Activated CD8-positive, alpha-beta T cell treated with anti-CD3 and anti-CD28 coated beads for 36 hours (primary cell): ENCODE measurements at regions of chr1 and their contacts with region 1.

Region 1: GRCh38 chr1:24415334-24415909 is at the start of gene NIPAL3:
- DNase-seq: peak; percentile 99
- ATAC-seq: peak; percentile 93
- H3K4me3 Mint-ChIP-seq: peak within 1 kb of the TSS; percentile 98
- H3K27ac Mint-ChIP-seq: peak within 1 kb of the TSS; percentile 95
- H3K4me1 Mint-ChIP-seq: peaks cover 47% of the 10 kb centered on the region
- H3K27me3 Mint-ChIP-seq: no peaks in the 10 kb centered on the region
- CTCF ChIP-seq: peak; percentile 82
- total RNA-seq, gene NIPAL3: 33.2 to 33.3 TPM

Region 2: GRCh38 chr1:24435782-24436365 is 20.5 kb after region 1 on chr1:
- CTCF ChIA-PET with region 1: interaction called, 23 read pairs
- POLR2A ChIA-PET with region 1: no interaction called
- intact Hi-C with region 1: no loop called
- DNase-seq: peak; percentile 18
- ATAC-seq: peak; percentile 45
- H3K4me3 Mint-ChIP-seq: no peak overlapping the region
- H3K27ac Mint-ChIP-seq: peak overlapping the region; percentile 7
- H3K4me1 Mint-ChIP-seq: peaks cover 23% of the 10 kb centered on the region
- H3K27me3 Mint-ChIP-seq: no peaks in the 10 kb centered on the region
- CTCF ChIP-seq: no peak

Region 3: DNA sequence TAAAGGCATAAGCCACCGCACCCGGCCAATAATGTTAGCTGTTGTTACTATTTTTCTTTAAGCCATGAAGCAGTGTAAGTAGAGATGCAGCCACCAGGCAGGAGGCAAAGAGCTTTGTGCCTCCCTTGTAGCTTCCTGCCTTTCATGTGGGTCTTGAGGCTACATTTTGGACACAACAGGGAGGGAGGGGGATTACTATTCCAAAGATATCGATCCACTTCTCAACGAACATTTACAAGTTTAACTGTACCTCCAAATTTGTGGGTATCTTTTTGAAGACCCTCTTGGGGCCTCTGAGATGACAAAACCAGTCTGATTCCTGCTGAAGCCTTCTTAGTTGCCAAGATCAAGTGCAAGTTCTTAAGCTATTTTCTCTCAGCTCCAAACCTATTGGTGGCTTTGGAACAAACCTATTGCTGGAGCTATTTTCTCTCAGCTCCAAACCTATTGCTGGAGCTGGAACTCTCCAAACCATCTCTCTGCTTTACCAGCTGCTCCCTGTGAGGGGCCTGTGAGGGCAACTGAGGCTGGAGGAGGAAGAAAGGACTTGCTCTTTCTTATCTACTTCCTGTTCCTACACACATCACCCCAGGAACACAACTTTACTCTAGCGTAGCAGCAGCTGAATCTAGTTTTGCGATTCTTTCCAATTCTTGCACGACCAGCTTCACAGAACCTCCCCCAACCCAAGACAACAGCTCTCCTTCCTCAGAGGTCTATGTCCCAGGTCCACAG is 71.1 kb after region 1 on chr1:
- CTCF ChIA-PET with region 1: interaction called, 22 read pairs
- POLR2A ChIA-PET with region 1: interaction called, 6 read pairs
- intact Hi-C with region 1: loop called (anchors 5 kb)
- DNase-seq: no peak
- ATAC-seq: peak; percentile 24
- H3K4me3 Mint-ChIP-seq: peak overlapping the region; percentile 70
- H3K27ac Mint-ChIP-seq: peak overlapping the region; percentile 93
- H3K4me1 Mint-ChIP-seq: peaks cover 76% of the 10 kb centered on the region
- H3K27me3 Mint-ChIP-seq: no peaks in the 10 kb centered on the region
- CTCF ChIP-seq: no peak

Region 4: GRCh38 chr1:24526940-24527542 is 111.6 kb after region 1 on chr1:
- CTCF ChIA-PET with region 1: interaction called, 74 read pairs
- POLR2A ChIA-PET with region 1: no interaction called
- intact Hi-C with region 1: no loop called
- DNase-seq: peak; percentile 70
- ATAC-seq: peak; percentile 65
- H3K4me3 Mint-ChIP-seq: no peak overlapping the region
- H3K27ac Mint-ChIP-seq: peak overlapping the region; percentile 55
- H3K4me1 Mint-ChIP-seq: peaks cover 57% of the 10 kb centered on the region
- H3K27me3 Mint-ChIP-seq: no peaks in the 10 kb centered on the region
- CTCF ChIP-seq: peak; percentile 82

Region 5: DNA sequence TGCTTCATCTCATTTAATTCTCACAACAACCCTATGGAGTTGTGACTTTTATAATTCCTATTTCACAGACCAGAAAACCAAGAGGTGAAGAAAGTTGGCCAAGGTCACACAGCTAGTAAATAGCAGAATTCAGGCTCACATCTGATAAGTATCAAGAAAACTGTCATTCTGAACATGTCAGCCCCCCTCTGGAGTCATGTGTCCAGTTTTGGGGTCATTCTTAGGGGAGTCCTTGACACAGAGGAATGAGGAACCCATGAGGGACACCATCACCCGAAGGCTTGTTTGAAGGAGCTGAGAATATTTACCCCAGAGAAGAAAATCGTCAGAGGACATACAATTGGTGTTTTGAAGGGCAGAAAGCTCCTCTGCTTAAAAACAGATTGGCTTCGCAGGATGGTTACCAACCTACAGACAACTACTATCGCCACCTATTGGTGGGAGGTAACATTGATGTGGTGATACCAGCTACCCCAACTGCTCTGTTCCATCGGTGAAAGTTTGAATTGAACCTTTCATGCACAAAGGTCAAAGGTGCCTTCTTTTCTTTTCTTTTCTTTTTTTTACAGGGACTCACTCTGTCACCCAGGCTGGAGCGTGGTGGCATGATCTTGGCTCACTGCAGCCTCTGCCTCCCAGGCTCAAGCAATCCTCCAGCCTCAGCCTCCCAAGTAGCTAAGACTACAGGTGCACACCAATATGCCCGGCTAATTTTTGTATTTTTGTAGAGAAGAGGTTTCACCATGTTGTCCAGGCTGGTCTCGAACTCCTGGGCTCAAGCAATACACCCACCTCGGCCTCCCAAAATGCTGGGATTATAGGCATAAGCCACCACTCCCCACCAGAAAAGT is 171.8 kb after region 1 on chr1:
- CTCF ChIA-PET with region 1: interaction called, 67 read pairs
- POLR2A ChIA-PET with region 1: interaction called, 3 read pairs
- intact Hi-C with region 1: loop called (anchors 5 kb)
- DNase-seq: peak; percentile 70
- ATAC-seq: peak; percentile 98
- H3K4me3 Mint-ChIP-seq: no peak overlapping the region
- H3K27ac Mint-ChIP-seq: peak overlapping the region; percentile 78
- H3K4me1 Mint-ChIP-seq: peaks cover 8% of the 10 kb centered on the region
- H3K27me3 Mint-ChIP-seq: no peaks in the 10 kb centered on the region
- CTCF ChIP-seq: peak; percentile 71